Common myeloid progenitor, CD34-positive (primary cell): ENCODE measurements at regions of chr2 and their contacts with region 1.

Region 1: GRCh38 chr2:186903216-186903615 is 54.2 kb upstream of the ZSWIM2 start:
- DNase-seq: peak in 2 of 3 donors; percentile 36 to 40
- H3K4me3 ChIP-seq: no peak overlapping the region
- H3K27ac ChIP-seq: no peak overlapping the region
- H3K4me1 ChIP-seq: no peaks in the 10 kb centered on the region
- H3K27me3 ChIP-seq: no peaks in the 10 kb centered on the region

Region 2: GRCh38 chr2:186862869-186863709 is 40.1 kb before region 1 on chr2:
- CTCF ChIA-PET with region 1: interaction called, 46 read pairs
- POLR2A ChIA-PET with region 1: interaction called, 4 read pairs
- DNase-seq: peak; percentile 48 to 75 (median 68)
- H3K4me3 ChIP-seq: no peak overlapping the region
- H3K27ac ChIP-seq: no peak overlapping the region
- H3K4me1 ChIP-seq: peaks cover 0 to 2% (median 0%) of the 10 kb centered on the region in 4 experiments
- H3K27me3 ChIP-seq: no peaks in the 10 kb centered on the region

Region 3: DNA sequence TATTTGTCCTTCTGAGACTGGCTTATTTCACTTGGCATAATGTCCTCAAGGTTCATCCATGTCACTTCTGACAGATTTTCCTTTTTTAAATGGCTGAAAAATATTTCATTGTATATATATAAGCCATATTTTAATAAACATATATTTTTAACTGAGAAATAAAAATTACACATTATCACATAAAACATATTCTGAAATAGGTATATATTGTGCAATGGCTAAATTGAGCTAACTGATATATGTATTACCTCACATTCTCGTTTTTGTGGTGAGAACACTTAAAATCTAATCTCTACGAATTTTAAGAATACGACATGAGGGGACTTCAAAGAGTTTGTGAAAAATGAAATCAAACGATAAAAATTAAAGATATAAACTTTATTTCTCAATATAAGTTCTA is 28.5 kb before region 1 on chr2:
- CTCF ChIA-PET with region 1: interaction called, 12 read pairs
- POLR2A ChIA-PET with region 1: no interaction called
- DNase-seq: no peak
- H3K4me3 ChIP-seq: no peak overlapping the region
- H3K27ac ChIP-seq: no peak overlapping the region
- H3K4me1 ChIP-seq: no peaks in the 10 kb centered on the region
- H3K27me3 ChIP-seq: no peaks in the 10 kb centered on the region

Region 4: GRCh38 chr2:186913870-186914269 is 10.7 kb after region 1 on chr2:
- CTCF ChIA-PET with region 1: interaction called, 14 read pairs
- POLR2A ChIA-PET with region 1: no interaction called
- DNase-seq: peak in 2 of 3 donors; percentile 73 to 87
- H3K4me3 ChIP-seq: no peak overlapping the region
- H3K27ac ChIP-seq: no peak overlapping the region
- H3K4me1 ChIP-seq: peaks cover 0 to 15% (median 7%) of the 10 kb centered on the region in 4 experiments
- H3K27me3 ChIP-seq: no peaks in the 10 kb centered on the region

Region 5: GRCh38 chr2:186919296-186919695 is 16.1 kb after region 1 on chr2:
- CTCF ChIA-PET with region 1: interaction called, 14 read pairs
- POLR2A ChIA-PET with region 1: no interaction called
- DNase-seq: peak; percentile 36 to 85 (median 78)
- H3K4me3 ChIP-seq: no peak overlapping the region
- H3K27ac ChIP-seq: peak overlapping the region in 1 of 2 experiments; percentile 25
- H3K4me1 ChIP-seq: peaks cover 0 to 2% (median 0%) of the 10 kb centered on the region in 4 experiments
- H3K27me3 ChIP-seq: no peaks in the 10 kb centered on the region

Region 6: GRCh38 chr2:187453078-187453641 is 549.9 kb after region 1 on chr2:
- CTCF ChIA-PET with region 1: interaction called, 18 read pairs
- POLR2A ChIA-PET with region 1: interaction called, 3 read pairs
- DNase-seq: peak; percentile 49 to 68 (median 55)
- H3K4me3 ChIP-seq: no peak overlapping the region
- H3K27ac ChIP-seq: no peak overlapping the region
- H3K4me1 ChIP-seq: peaks cover 3 to 5% (median 4%) of the 10 kb centered on the region in 4 experiments
- H3K27me3 ChIP-seq: no peaks in the 10 kb centered on the region